ENCODE measurements at regions of chr22 and their contacts with region 1.

Region 1: GRCh38 chr22:19717691-19718455 is 3.6 kb downstream of the SEPTIN5 start:
- DNase-seq: no peak
- H3K4me3 ChIP-seq: peak overlapping the region; percentile 66 to 86 (median 70)
- H3K27ac ChIP-seq: peak overlapping the region in 3 of 4 donors; percentile 44 to 69 (median 64)
- H3K4me1 ChIP-seq: peaks cover 52 to 64% (median 52%) of the 10 kb centered on the region in 4 donors
- H3K27me3 ChIP-seq: peaks cover 0 to 86% (median 5%) of the 10 kb centered on the region in 4 donors
- CTCF ChIP-seq: peak in 2 of 3 experiments; percentile 94 to 99
- EP300 ChIP-seq: no peak
- POLR2A ChIP-seq: no peak

Region 2: GRCh38 chr22:19656541-19657251 is 61.2 kb before region 1 on chr22:
- intact Hi-C with region 1: no loop called
- DNase-seq: no peak
- H3K4me3 ChIP-seq: no peak overlapping the region
- H3K27ac ChIP-seq: no peak overlapping the region
- H3K4me1 ChIP-seq: no peaks in the 10 kb centered on the region
- H3K27me3 ChIP-seq: peaks cover 0 to 6% (median 0%) of the 10 kb centered on the region in 4 donors
- CTCF ChIP-seq: no peak
- EP300 ChIP-seq: no peak
- POLR2A ChIP-seq: no peak

Region 3: DNA sequence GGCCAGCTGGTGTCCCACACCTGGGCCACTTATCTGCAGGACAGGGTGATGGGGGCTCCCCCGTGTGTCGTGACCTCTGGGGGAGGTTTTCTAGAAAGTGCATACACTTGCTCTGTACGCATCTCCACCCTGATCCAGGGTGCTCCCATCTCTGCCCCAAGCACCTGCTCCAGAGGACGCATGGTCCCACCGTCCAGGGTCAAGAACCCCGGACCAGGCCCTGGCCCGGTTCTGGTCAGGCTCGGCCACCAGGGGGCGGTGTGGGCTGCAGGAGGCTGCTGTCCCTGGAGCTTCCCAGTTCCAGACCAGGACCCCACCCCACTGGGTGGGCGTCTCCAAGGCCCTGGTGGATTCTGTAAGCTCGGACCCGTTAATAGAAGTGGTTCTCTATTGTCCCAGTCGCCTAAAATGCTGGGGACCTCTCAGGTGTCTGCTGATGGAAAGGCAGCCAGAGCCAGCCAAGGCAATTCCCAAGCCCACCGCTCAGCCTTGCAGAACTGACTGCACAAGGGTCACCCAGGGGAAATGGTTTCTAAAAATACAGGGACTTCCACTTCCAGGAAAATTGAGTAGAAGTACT is 38.3 kb before region 1 on chr22:
- intact Hi-C with region 1: loop called (anchors 1 kb)
- DNase-seq: no peak
- H3K4me3 ChIP-seq: no peak overlapping the region
- H3K27ac ChIP-seq: no peak overlapping the region
- H3K4me1 ChIP-seq: peaks cover 0 to 4% (median 3%) of the 10 kb centered on the region in 4 donors
- H3K27me3 ChIP-seq: peaks cover 0 to 37% (median 0%) of the 10 kb centered on the region in 4 donors
- CTCF ChIP-seq: peak; percentile 66 to 83 (median 83)
- EP300 ChIP-seq: no peak
- POLR2A ChIP-seq: no peak

Measured in esophagus muscularis mucosa (tissue), 4 donors.